H1 (cell line): ENCODE measurements at regions of chr16 and their contacts with region 1.

Region 1: DNA sequence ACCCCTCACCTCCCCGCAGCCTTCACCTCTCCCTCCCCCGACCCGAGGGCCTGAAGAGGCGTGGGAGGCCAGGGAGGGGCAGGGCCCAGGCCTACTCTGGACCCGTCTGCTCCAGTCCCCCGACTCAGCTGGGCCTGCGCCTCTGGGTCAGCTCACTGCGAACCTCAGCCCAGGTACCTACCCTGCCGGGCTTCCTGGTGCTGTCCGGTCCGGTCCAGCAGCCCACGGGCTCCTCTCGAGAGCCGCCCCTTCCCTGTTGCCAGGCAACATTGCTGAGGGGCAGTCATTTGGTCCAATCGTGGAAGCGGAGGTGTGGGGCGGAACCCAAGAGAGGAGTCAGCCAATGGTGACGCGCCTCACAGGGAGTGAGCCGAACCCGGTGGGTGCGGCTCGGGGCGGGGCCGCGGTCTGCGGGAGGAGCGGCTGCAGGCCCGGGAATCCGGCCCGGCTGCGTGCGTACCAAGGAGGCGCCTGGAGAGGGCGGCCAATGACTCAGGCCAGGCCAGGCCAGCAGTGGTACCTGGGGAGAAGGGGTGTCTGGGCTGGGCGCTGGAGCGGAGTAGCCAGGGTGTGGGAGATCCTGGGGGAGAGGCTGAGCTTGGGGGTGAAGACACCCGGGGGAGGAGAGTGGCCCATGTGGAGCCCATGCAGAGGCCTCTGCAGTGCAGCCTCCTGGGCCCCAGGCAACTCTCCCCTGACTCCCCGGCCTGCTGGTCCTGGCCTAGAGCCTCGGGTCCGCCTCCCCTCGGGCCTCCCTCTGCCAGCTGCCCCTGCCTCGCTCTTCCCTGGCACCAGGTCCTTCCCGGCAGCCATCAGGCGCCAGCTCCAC is at the start of gene MEAK7:
- DNase-seq: peak; percentile 93 to 100
- H3K4me3 ChIP-seq: peak within 1 kb of the TSS; percentile 65 to 96 (median 93)
- H3K27ac ChIP-seq: peak within 1 kb of the TSS; percentile 44; the same call in 1 of the 2 replicates
- H3K4me1 ChIP-seq: peaks cover 0 to 18% (median 13%) of the 10 kb centered on the region in 4 experiments; a peak in 5 of 7 replicates
- H3K27me3 ChIP-seq: no peaks in the 10 kb centered on the region
- CTCF ChIP-seq: peak in 2 of 3 experiments; percentile 2 to 9; a peak in 2 of 4 replicates
- EP300 ChIP-seq: 0 out of 3 replicates have a peak, but pooled peaks of 1 of the 2 experiments have one; percentile 21
- POLR2A ChIP-seq: peak in 1 of 2 experiments; percentile 73; a peak in 2 of 3 replicates
- RAD21 ChIP-seq: no peak
- total RNA-seq, gene MEAK7: 19.0 and 19.6 TPM in 2 replicates

Region 2: DNA sequence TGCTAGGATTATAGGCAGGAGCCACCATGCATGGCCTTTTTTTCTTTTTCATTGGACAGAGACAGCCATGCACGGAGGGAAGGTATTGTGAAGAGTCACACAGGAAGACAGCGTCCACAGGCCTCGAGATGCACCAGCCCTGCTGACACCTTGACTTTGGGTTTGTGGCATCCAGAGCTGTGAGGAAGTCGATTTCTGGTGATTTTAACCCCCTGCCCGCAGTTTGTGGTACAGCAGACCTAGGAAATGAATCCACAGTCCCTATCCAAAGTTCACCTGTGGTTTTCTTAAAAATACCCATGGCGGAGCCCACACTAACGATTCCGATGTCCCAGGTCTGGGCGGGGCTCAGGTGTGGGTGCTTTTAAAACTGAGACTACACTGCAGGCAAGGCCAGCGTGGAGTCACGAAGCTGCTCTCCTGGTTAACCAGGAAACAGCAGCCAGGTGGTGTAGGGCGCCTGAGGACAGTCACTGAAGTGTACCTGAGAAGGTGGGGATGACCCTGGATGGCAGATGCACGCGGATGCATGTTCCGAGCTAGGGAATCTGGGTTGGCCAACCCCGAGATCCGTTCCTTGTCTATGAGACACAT is 14.2 kb after region 1 on chr16:
- CTCF ChIA-PET with region 1: interaction called, 29 read pairs
- POLR2A ChIA-PET with region 1: no interaction called
- DNase-seq: no peak
- H3K4me3 ChIP-seq: no peak overlapping the region
- H3K27ac ChIP-seq: no peak overlapping the region
- H3K4me1 ChIP-seq: peaks cover 0 to 9% (median 3%) of the 10 kb centered on the region in 4 experiments; a peak in 5 of 7 replicates
- H3K27me3 ChIP-seq: no peaks in the 10 kb centered on the region; a peak in 1 of 7 replicates
- CTCF ChIP-seq: no peak
- EP300 ChIP-seq: no peak
- POLR2A ChIP-seq: no peak
- RAD21 ChIP-seq: no peak; a peak in 1 of 4 replicates

Region 3: GRCh38 chr16:84527504-84528269 is 23.1 kb after region 1 on chr16:
- CTCF ChIA-PET with region 1: interaction called, 34 read pairs
- POLR2A ChIA-PET with region 1: interaction called, 3 read pairs
- DNase-seq: no peak
- H3K4me3 ChIP-seq: no peak overlapping the region
- H3K27ac ChIP-seq: no peak overlapping the region
- H3K4me1 ChIP-seq: peaks cover 5 to 17% (median 11%) of the 10 kb centered on the region in 4 experiments
- H3K27me3 ChIP-seq: no peaks in the 10 kb centered on the region; a peak in 1 of 7 replicates
- CTCF ChIP-seq: no peak
- EP300 ChIP-seq: no peak
- POLR2A ChIP-seq: no peak
- RAD21 ChIP-seq: no peak

Region 4: GRCh38 chr16:84569382-84569987 is 64.9 kb after region 1 on chr16:
- CTCF ChIA-PET with region 1: interaction called, 64 read pairs
- POLR2A ChIA-PET with region 1: interaction called, 3 read pairs
- DNase-seq: no peak
- H3K4me3 ChIP-seq: no peak overlapping the region
- H3K27ac ChIP-seq: no peak overlapping the region
- H3K4me1 ChIP-seq: peaks cover 12 to 18% (median 16%) of the 10 kb centered on the region in 4 experiments
- H3K27me3 ChIP-seq: no peaks in the 10 kb centered on the region
- CTCF ChIP-seq: no peak
- EP300 ChIP-seq: no peak
- POLR2A ChIP-seq: no peak
- RAD21 ChIP-seq: no peak

Region 5: DNA sequence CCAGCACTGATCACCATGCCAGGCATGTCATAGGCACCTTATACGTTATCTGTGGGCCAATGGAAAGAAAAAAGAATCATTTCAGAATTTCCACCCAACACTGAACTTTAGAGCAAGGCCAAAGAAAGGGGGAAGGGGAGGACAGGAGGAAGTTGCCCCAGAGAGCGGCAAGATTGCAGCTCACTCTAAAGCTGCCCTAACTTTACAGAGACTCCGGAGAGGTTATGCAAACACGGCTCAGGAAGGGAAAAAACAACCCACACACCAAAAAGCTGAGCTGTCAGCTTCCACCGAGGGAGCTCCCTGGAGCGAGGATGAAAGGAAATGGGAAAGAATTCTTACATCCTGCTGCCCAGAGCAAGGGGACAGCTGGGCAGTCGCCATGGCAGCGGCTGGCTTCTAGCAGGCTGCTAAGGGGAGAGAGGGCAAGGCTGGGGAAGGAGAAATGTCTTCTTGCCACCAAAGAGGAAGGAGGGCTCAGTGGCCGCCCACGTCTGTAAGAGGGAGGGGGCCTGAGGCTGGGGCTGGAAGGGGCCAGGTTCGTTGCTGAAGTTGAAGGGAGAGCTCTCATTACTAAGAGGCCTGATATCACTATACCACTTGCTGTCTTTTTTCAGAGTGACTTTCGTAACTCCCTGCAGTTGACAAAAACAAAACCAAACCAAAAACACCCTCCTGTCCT is 95.0 kb after region 1 on chr16:
- CTCF ChIA-PET with region 1: interaction called, 10 read pairs
- POLR2A ChIA-PET with region 1: interaction called, 5 read pairs
- DNase-seq: peak; percentile 50 to 79
- H3K4me3 ChIP-seq: peak overlapping the region in 2 of 4 experiments; percentile 14 to 36; a peak in 5 of 8 replicates
- H3K27ac ChIP-seq: no peak overlapping the region
- H3K4me1 ChIP-seq: peaks cover 4 to 37% (median 26%) of the 10 kb centered on the region in 4 experiments
- H3K27me3 ChIP-seq: peaks cover 0 to 4% (median 1%) of the 10 kb centered on the region in 4 experiments; a peak in 3 of 7 replicates
- CTCF ChIP-seq: no peak
- EP300 ChIP-seq: no peak
- POLR2A ChIP-seq: no peak
- RAD21 ChIP-seq: no peak